IMR-90 (cell line): ENCODE measurements at regions of chr2 and their contacts with region 1.

Region 1: GRCh38 chr2:170361090-170361936 is 183.4 kb downstream of the MYO3B start:
- DNase-seq: peak; percentile 50
- ATAC-seq: peak; percentile 78
- H3K4me3 ChIP-seq: no peak overlapping the region
- H3K27ac ChIP-seq: no peak overlapping the region
- H3K4me1 ChIP-seq: no peaks in the 10 kb centered on the region
- H3K27me3 ChIP-seq: peaks cover 12% of the 10 kb centered on the region
- CTCF ChIP-seq: peak; percentile 61
- POLR2A ChIP-seq: no peak
- RAD21 ChIP-seq: peak; percentile 41; the same call in 1 of the 2 replicates

Region 2: GRCh38 chr2:169933124-169933711 is 428.1 kb before region 1 on chr2:
- CTCF ChIA-PET with region 1: no interaction called
- POLR2A ChIA-PET with region 1: no interaction called
- dilution Hi-C with region 1: no loop called
- in situ Hi-C with region 1: no loop called
- intact Hi-C with region 1: loop called (anchors 5 kb)
- DNase-seq: peak; percentile 54
- ATAC-seq: peak; percentile 89
- H3K4me3 ChIP-seq: no peak overlapping the region
- H3K27ac ChIP-seq: no peak overlapping the region
- H3K4me1 ChIP-seq: no peaks in the 10 kb centered on the region
- H3K27me3 ChIP-seq: no peaks in the 10 kb centered on the region
- CTCF ChIP-seq: peak; percentile 75
- POLR2A ChIP-seq: no peak
- RAD21 ChIP-seq: peak; percentile 74

Region 3: DNA sequence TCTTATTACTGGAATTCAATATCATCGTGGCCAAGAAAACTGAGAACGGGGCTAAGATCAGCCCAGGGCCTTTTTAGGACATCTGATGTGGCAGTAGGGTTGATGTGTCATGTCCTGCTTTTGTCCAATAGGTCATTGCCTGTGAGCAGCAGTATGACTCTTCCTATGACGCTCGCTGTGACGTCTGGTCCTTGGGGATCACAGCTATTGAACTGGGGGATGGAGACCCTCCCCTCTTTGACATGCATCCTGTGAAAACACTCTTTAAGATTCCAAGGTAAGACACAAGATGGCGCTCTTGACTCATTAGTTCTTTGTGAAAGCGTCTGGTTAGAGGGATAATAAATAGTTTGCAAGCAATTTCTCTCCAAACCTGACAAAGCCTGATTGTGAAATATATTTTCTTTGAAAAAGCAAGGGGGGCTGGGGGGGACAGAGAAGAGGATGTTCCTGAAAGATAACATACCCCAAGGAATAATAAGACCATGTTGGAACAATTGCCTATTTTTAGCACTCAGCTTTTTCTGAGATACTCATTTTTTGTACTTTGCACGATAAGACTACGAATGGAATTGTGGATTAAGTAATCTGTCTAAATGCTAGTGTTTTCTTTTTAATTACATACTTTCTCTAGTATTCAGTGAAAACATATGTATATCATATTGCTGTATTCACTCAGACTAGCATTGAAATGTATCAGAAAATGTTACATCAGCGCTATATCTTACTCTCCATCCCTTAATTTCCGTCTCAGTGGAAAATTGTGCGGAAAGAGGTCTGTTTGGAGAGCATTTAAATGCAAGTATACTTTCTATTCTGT is 125.2 kb before region 1 on chr2:
- CTCF ChIA-PET with region 1: interaction called, 4 read pairs
- POLR2A ChIA-PET with region 1: no interaction called
- dilution Hi-C with region 1: no loop called
- in situ Hi-C with region 1: no loop called
- intact Hi-C with region 1: loop called (anchors 5 kb)
- DNase-seq: peak; percentile 54
- ATAC-seq: peak; percentile 69; the same call in 1 of the 2 replicates
- H3K4me3 ChIP-seq: no peak overlapping the region
- H3K27ac ChIP-seq: no peak overlapping the region
- H3K4me1 ChIP-seq: no peaks in the 10 kb centered on the region
- H3K27me3 ChIP-seq: peaks cover 14% of the 10 kb centered on the region
- CTCF ChIP-seq: peak; percentile 61
- POLR2A ChIP-seq: no peak
- RAD21 ChIP-seq: peak; percentile 64